ENCODE measurements at regions of chr4 and their contacts with region 1.

Region 1: GRCh38 chr4:118684873-118685811 is at the start of gene METTL14:
- DNase-seq: peak; percentile 86 to 92
- ATAC-seq: peak; percentile 94 to 96 (median 95)
- H3K4me3 ChIP-seq: peak within 1 kb of the TSS; percentile 98
- H3K4me3 Mint-ChIP-seq: peak within 1 kb of the TSS; percentile 97
- H3K27ac ChIP-seq: peak within 1 kb of the TSS; percentile 94
- H3K27ac Mint-ChIP-seq: peak within 1 kb of the TSS; percentile 96 to 97
- H3K4me1 ChIP-seq: peaks cover 4% of the 10 kb centered on the region
- H3K4me1 Mint-ChIP-seq: peaks cover 21 to 26% of the 10 kb centered on the region in 2 donors
- H3K27me3 ChIP-seq: no peaks in the 10 kb centered on the region
- H3K27me3 Mint-ChIP-seq: peaks cover 14 to 24% of the 10 kb centered on the region in 2 donors
- CTCF ChIP-seq: no peak
- total RNA-seq, gene METTL14: 50.2 to 57.5 (median 51.9) TPM

Region 2: DNA sequence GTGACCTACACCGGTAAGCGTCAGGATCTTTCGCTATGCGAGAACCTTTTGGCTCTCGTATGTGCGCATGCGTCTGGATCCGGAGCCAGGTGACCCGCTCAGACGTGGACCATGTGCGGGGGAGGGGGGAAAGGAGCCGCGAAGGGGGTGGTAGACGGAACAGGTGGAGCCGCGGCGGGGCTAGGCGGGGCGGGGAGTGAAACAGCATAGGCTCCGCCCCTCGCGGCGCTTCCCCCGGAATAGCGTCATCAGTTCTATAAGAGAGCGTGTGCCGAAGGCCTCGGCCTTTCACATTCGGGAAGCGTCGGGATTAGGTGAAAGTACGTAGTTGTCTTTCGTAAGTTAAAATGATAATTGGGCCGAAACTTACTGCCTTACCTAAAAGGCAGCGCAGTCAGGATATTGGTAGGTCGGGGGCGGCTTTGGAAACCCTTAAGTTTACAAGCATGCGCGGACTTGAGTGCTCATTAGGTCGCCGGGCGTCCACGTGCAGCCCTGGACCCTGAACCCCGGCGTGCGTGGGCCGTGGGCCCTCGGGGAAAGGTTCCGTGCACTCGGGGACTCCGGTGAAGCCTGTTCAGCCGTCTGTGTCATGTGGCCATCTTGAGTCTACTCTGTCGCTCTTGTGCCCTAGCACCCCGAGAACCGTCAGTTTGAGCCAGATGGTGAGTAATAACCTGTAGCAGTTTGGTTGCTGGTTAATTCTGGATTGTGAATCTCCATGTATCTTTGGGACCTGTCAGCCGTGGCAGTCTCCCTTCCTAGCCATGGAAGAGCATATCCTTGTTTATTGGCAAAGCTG is 406.5 kb before region 1 on chr4:
- intact Hi-C with region 1: loop called (anchors 1 kb)
- DNase-seq: peak; percentile 89 to 99
- ATAC-seq: peak; percentile 92 to 99 (median 95)
- H3K4me3 ChIP-seq: peak overlapping the region; percentile 84
- H3K4me3 Mint-ChIP-seq: peak overlapping the region; percentile 95
- H3K27ac ChIP-seq: peak overlapping the region; percentile 92
- H3K27ac Mint-ChIP-seq: peak overlapping the region; percentile 97 to 99
- H3K4me1 ChIP-seq: peaks cover 17% of the 10 kb centered on the region
- H3K4me1 Mint-ChIP-seq: peaks cover 37 to 41% of the 10 kb centered on the region in 2 donors
- H3K27me3 ChIP-seq: no peaks in the 10 kb centered on the region
- H3K27me3 Mint-ChIP-seq: no peaks in the 10 kb centered on the region
- CTCF ChIP-seq: no peak

Region 3: DNA sequence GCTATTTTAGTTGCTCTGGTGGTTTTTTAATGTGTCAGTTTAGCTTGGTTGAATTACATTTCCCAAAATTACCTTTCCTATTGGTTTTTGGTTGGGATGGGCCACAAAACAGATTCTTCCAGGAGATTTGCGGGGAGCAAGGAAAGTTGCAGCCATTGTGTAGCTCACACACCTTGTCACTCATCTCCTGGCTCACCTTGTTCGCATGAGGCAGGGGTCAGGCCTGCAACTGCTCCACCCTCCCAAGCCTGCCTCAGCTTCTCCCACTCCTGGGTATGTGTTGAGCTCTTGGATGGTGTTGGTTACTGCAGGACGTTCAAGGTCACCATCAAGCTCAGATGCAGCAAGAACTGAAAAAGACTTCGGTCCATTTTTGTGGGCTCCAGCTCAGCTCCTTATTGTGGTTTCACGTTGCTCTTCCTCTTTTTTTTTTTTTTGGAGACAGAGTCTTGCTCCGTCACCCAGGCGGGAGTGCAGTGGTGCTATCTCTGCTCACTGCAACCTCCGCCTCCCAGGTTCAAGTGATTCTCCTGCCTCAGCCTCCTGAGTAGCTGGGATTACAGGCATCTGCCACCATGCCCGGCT is 95.6 kb before region 1 on chr4:
- intact Hi-C with region 1: loop called (anchors 2 kb)
- DNase-seq: no peak
- ATAC-seq: no peak
- H3K4me3 ChIP-seq: no peak overlapping the region
- H3K4me3 Mint-ChIP-seq: no peak overlapping the region
- H3K27ac ChIP-seq: no peak overlapping the region
- H3K27ac Mint-ChIP-seq: no peak overlapping the region
- H3K4me1 ChIP-seq: peaks cover 6% of the 10 kb centered on the region
- H3K4me1 Mint-ChIP-seq: peaks cover 9 to 10% of the 10 kb centered on the region in 2 donors
- H3K27me3 ChIP-seq: no peaks in the 10 kb centered on the region
- H3K27me3 Mint-ChIP-seq: peaks cover 6 to 11% of the 10 kb centered on the region in 2 donors
- CTCF ChIP-seq: no peak

Measured in natural killer cell (primary cell).